Posterior vena cava (tissue), 2 donors: ENCODE measurements at regions of chr11 and their contacts with region 1.

Region 1: DNA sequence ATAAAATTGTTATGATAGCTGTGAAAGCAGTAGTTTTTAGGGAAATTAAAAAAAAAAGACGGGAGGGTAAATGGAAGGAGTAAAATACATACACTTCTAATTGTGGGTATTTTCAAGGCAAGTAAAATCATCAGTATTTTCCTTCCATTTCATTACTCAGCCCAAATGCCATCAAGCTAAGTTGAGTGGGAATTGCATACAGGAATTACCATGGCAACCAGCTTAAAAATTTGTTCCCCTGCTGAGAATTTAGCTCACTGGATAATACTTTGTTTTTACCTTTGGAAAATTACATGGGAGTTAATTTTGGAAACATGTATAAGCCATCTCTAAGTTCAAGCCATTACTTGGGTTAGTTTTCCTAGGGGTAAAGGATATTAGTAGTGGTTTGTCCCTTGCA is 1873.4 kb downstream of the LRRC4C start:
- DNase-seq: no peak

Region 2: GRCh38 chr11:37881741-37882140 is 1704.3 kb before region 1 on chr11:
- intact Hi-C with region 1: loop called in 1 of 2 experiments (anchors 5 kb)
- DNase-seq: no peak

Region 3: GRCh38 chr11:39361557-39361956 is 224.5 kb before region 1 on chr11:
- intact Hi-C with region 1: no loop called
- DNase-seq: no peak